ENCODE measurements at regions of chr6 and their contacts with region 1.

Region 1: GRCh38 chr6:33620856-33621710 is at the start of gene ITPR3:
- DNase-seq: peak; percentile 86
- ATAC-seq: peak; percentile 85
- H3K4me3 Mint-ChIP-seq: peak within 1 kb of the TSS; percentile 94
- H3K27ac Mint-ChIP-seq: peak within 1 kb of the TSS; percentile 91
- H3K4me1 Mint-ChIP-seq: peaks cover 46% of the 10 kb centered on the region
- H3K27me3 Mint-ChIP-seq: no peaks in the 10 kb centered on the region
- total RNA-seq, gene ITPR3: 42.6 to 42.9 TPM

Region 2: DNA sequence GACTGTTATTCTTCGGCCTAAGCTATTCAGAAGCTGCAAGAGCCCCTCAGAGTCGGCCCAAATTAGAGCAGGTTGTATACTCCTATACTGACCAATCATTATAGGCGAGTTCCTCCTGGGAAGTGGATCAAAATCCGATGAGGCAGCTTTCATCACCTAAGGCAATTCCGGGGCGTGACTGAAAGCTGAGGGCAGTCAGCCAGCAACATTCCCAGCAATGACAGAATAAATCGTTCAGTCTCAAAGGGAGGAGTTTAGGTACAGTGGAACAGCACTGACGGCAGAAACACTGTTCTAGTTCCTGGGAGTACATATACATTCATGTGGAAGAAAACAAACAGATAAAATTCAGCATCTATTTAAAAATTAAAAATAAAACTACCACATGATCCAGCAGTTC is 868.5 kb before region 1 on chr6:
- CTCF ChIA-PET with region 1: no interaction called
- POLR2A ChIA-PET with region 1: no interaction called
- intact Hi-C with region 1: no loop called
- DNase-seq: no peak
- ATAC-seq: no peak
- H3K4me3 Mint-ChIP-seq: no peak overlapping the region
- H3K27ac Mint-ChIP-seq: no peak overlapping the region
- H3K4me1 Mint-ChIP-seq: no peaks in the 10 kb centered on the region
- H3K27me3 Mint-ChIP-seq: peaks cover 27% of the 10 kb centered on the region

Region 3: DNA sequence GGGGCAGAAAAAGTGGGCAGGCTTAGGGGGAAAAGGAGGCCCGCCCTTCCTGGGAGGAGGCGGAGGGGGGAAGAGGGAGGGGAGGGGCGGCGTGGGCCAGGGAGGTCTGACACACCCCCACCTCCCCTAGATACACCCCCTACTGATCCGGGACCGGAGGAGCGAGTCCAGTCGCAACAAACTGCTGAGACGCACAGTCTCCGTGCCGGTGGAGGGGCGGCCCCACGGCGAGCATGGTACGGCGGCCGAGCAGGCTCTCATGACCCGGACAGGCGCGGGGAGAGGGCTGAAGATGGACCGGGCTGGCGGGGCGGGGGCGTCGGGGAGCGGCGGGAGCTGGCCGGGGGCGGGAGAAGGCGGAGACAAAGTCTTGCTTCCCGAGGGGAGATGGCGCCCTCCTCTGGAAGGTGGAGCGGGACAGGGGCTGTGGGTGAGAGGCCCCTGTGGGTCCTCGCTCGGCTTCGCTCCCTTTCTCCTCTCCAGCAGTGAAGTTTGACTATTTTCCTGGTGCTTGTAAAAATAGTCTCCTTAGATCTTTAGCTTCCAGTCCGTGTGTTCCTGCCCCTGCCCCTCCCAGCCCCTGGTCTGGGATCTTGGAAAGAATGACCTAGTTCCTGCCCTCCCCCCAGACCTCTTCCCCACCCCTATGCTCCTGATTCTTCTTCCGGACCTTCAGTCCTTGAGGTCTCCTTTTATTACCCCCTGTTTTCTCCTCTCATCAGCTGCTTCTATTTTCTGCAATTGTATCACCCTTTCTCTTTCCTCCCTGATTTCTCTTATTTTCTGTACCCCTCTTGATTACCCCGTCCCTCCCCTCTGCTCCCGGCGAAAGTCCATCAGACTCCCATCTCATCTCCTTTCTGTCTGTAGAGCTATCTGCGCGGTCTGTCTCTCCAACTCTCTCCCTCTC is 195.2 kb before region 1 on chr6:
- CTCF ChIA-PET with region 1: interaction called, 3 read pairs
- POLR2A ChIA-PET with region 1: no interaction called
- intact Hi-C with region 1: loop called in 1 of 2 experiments (anchors 5 kb)
- DNase-seq: peak; percentile 93
- ATAC-seq: peak; percentile 49
- H3K4me3 Mint-ChIP-seq: peak overlapping the region; percentile 88
- H3K27ac Mint-ChIP-seq: peak overlapping the region; percentile 90
- H3K4me1 Mint-ChIP-seq: peaks cover 65% of the 10 kb centered on the region
- H3K27me3 Mint-ChIP-seq: no peaks in the 10 kb centered on the region

Region 4: GRCh38 chr6:33508935-33509926 is 111.9 kb before region 1 on chr6:
- CTCF ChIA-PET with region 1: no interaction called
- POLR2A ChIA-PET with region 1: interaction called, 10 read pairs
- intact Hi-C with region 1: no loop called
- DNase-seq: no peak
- ATAC-seq: no peak
- H3K4me3 Mint-ChIP-seq: no peak overlapping the region
- H3K27ac Mint-ChIP-seq: no peak overlapping the region
- H3K4me1 Mint-ChIP-seq: peaks cover 7% of the 10 kb centered on the region
- H3K27me3 Mint-ChIP-seq: peaks cover 10% of the 10 kb centered on the region

Region 5: DNA sequence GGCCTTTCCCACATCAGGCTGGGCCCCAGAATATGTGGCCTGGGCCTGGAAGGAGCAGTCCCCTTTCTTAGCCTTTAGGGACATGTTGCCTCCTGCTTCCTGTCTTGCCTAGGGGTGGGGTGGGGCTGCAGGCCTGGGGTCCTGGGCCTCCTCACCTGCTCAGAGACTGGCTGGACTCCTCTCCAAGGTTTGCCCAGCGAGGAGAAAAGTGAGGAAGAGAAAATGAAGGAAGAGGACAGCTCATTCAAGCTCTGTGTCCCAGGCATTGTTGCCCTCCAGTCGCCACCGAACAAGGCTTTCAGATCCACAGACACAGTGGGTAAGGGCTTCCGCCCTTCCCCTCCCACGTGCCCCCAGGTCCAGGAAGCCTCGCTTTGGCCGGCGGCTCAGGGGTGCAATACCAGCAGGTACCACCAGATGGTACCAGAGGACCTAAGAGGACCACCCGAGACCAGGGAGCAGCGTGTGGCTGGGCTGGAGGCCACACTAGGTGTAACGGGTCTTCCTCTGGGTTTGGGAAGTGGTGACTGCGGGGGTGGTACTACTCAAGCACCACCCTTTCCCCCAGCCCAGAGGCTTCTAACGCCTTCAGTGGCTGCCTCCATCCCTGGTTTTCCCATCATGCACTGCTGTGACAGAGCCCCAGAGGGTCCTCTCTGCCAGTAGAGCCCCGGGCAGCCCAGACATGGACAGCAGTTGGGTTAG is 35.5 kb before region 1 on chr6:
- CTCF ChIA-PET with region 1: interaction called, 9 read pairs
- POLR2A ChIA-PET with region 1: no interaction called
- intact Hi-C with region 1: loop called in 1 of 2 experiments (anchors 5 kb)
- DNase-seq: peak; percentile 93
- ATAC-seq: peak; percentile 85
- H3K4me3 Mint-ChIP-seq: peak overlapping the region; percentile 66
- H3K27ac Mint-ChIP-seq: peak overlapping the region; percentile 92
- H3K4me1 Mint-ChIP-seq: peaks cover 22% of the 10 kb centered on the region
- H3K27me3 Mint-ChIP-seq: no peaks in the 10 kb centered on the region

Region 6: DNA sequence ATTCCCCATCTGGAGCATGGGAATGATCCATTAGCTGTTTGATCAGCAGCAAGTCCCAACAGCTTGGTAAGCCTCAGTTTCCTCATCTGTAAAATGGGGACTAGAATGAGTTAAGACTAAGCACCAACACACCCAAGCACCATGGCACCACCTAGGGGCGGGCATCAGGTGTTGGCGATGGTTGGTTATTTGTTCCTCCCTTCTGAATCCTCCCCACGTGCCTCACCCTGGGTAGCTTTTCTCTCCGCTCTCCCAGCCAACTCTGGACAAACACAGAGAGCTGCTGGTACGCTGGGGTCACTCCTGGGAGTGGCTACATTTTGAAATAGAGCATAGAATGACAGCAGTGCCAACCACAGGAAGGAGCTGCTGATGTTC is 13.3 kb before region 1 on chr6:
- CTCF ChIA-PET with region 1: interaction called, 22 read pairs
- POLR2A ChIA-PET with region 1: no interaction called
- intact Hi-C with region 1: loop called in 1 of 2 experiments (anchors 1 kb)
- DNase-seq: peak; percentile 76
- ATAC-seq: peak; percentile 88
- H3K4me3 Mint-ChIP-seq: no peak overlapping the region
- H3K27ac Mint-ChIP-seq: no peak overlapping the region
- H3K4me1 Mint-ChIP-seq: no peaks in the 10 kb centered on the region
- H3K27me3 Mint-ChIP-seq: peaks cover 2% of the 10 kb centered on the region

Region 7: GRCh38 chr6:33788694-33789549 is 167.8 kb after region 1 on chr6 and contains the start of gene LEMD2:
- CTCF ChIA-PET with region 1: no interaction called
- POLR2A ChIA-PET with region 1: no interaction called
- intact Hi-C with region 1: loop called in 1 of 2 experiments (anchors 5 kb)
- DNase-seq: peak; percentile 93
- ATAC-seq: peak; percentile 87
- H3K4me3 Mint-ChIP-seq: peak within 1 kb of the TSS; percentile 96
- H3K27ac Mint-ChIP-seq: peak within 1 kb of the TSS; percentile 99
- H3K4me1 Mint-ChIP-seq: peaks cover 47% of the 10 kb centered on the region
- H3K27me3 Mint-ChIP-seq: no peaks in the 10 kb centered on the region
- total RNA-seq, gene LEMD2: 55.2 to 61.5 TPM

Measured in activated CD4-positive, alpha-beta T cell treated with anti-CD3 and anti-CD28 coated beads for 36 hours (primary cell).